Ovary (tissue), 10 donors: ENCODE measurements at regions of chr4 and their contacts with region 1.

Region 1: DNA sequence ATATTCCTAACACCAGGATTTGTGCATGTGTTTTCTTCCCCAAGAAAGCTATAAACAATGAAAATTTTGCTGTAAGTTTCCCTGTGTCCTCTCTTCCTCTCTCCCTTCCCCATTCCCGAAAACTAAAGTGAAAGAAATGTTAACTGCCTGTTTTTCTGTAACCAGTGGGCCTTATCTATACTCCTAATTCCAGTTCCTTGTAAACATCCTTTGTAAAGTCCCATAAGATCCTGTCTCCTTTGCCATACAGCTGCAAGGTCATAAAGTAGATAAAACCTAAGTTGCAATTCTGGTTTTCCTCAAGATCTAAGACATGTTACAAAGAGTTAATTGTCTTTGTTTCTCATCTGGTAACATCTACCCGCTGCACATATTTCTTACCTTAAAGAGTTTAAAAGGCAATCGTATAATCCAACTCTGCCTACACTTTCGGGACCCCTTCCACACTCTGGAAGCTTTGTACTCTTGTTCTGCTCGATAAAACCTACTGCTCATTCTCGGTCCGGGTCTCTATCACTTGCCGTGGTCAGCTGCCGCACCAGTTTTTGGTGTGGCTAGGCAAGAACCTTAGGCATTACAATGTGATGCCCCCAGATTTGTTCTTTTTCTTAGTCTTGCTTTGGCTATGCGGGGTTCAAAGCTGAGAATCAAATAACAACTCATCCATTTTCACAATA is 20.5 kb downstream of the UGT2B7 start:
- DNase-seq: no peak
- H3K4me3 ChIP-seq: no peak overlapping the region
- H3K27ac ChIP-seq: no peak overlapping the region
- H3K4me1 ChIP-seq: no peaks in the 10 kb centered on the region
- H3K27me3 ChIP-seq: no peaks in the 10 kb centered on the region
- CTCF ChIP-seq: no peak
- EP300 ChIP-seq: no peak
- POLR2A ChIP-seq: no peak

Region 2: GRCh38 chr4:70855464-70855863 is 1738.7 kb after region 1 on chr4:
- intact Hi-C with region 1: loop called in 1 of 4 experiments (anchors 5 kb)
- DNase-seq: no peak
- H3K4me3 ChIP-seq: no peak overlapping the region
- H3K27ac ChIP-seq: no peak overlapping the region
- H3K4me1 ChIP-seq: no peaks in the 10 kb centered on the region
- H3K27me3 ChIP-seq: no peaks in the 10 kb centered on the region
- CTCF ChIP-seq: no peak
- EP300 ChIP-seq: no peak
- POLR2A ChIP-seq: no peak